Caco-2 (cell line): ENCODE measurements at regions of chr10 and their contacts with region 1.

Region 1: GRCh38 chr10:48333856-48334255 is 27.4 kb downstream of the MAPK8 start:
- DNase-seq: no peak
- H3K4me3 ChIP-seq: no peak overlapping the region
- H3K4me3 Mint-ChIP-seq: no peak overlapping the region
- H3K27ac Mint-ChIP-seq: no peak overlapping the region
- H3K4me1 ChIP-seq: peaks cover 13% of the 10 kb centered on the region
- H3K4me1 Mint-ChIP-seq: peaks cover 17% of the 10 kb centered on the region
- H3K27me3 ChIP-seq: no peaks in the 10 kb centered on the region
- H3K27me3 Mint-ChIP-seq: no peaks in the 10 kb centered on the region
- CTCF ChIP-seq: no peak

Region 2: DNA sequence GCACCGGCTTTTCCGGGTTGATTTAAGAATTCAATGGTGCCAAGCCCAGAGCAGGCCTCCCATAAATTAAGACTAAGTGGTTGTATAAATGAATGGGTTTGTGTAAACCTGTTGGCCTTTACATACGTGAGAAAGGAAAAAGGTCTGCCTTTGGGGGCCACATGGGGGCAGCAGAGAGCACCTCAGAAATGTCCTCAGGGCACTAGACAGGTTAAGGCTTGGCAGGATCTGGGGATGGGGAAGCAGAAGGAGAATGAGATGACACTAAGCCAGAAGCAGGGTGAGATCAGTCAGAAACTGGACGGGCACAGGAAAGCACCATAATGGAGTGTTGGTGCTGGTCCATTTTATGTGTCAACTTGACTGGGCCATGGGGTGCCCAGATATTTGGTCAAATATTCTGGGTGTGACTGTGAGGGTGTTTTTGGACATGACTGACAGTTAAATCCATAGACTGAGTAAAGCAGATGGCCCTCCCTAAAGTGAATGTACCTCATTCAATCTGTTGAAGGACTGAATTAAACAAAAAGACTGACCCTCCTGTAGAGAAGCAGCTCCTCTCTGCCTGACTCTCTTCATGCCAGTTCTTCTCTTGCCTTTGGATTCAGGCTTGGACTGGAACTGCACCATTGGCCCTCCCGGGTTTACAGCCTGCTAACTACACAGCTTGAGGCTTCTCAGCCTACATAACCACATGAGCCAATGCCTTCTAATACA is 118.2 kb before region 1 on chr10:
- CTCF ChIA-PET with region 1: no interaction called
- POLR2A ChIA-PET with region 1: no interaction called
- intact Hi-C with region 1: loop called (anchors 5 kb)
- DNase-seq: peak; percentile 70 to 82
- H3K4me3 ChIP-seq: no peak overlapping the region
- H3K4me3 Mint-ChIP-seq: no peak overlapping the region
- H3K27ac Mint-ChIP-seq: no peak overlapping the region
- H3K4me1 ChIP-seq: no peaks in the 10 kb centered on the region
- H3K4me1 Mint-ChIP-seq: no peaks in the 10 kb centered on the region
- H3K27me3 ChIP-seq: no peaks in the 10 kb centered on the region
- H3K27me3 Mint-ChIP-seq: peaks cover 30% of the 10 kb centered on the region
- CTCF ChIP-seq: peak; percentile 94 to 95

Region 3: GRCh38 chr10:48254750-48255512 is 78.9 kb before region 1 on chr10:
- CTCF ChIA-PET with region 1: no interaction called
- POLR2A ChIA-PET with region 1: no interaction called
- intact Hi-C with region 1: no loop called
- DNase-seq: no peak
- H3K4me3 ChIP-seq: no peak overlapping the region
- H3K4me3 Mint-ChIP-seq: no peak overlapping the region
- H3K27ac Mint-ChIP-seq: no peak overlapping the region
- H3K4me1 ChIP-seq: peaks cover 6% of the 10 kb centered on the region; the same call in 1 of the 2 replicates
- H3K4me1 Mint-ChIP-seq: no peaks in the 10 kb centered on the region
- H3K27me3 ChIP-seq: no peaks in the 10 kb centered on the region
- H3K27me3 Mint-ChIP-seq: peaks cover 6% of the 10 kb centered on the region
- CTCF ChIP-seq: no peak